Activated T-helper 1 cell treated with anti-CD3 and anti-CD28 coated beads, Interleukin-12 subunit alpha, Interleukin-12 subunit beta, Interleukin-2, Interleukin-4 antibody, amounts not matched to agents 30 ng/mL and 10 ng/mL and 1 ng/mL, durations not matched to agents 14 hours and 24 hours and 36 hours (primary cell): ENCODE measurements at regions of chr7 and their contacts with region 1.

Region 1: GRCh38 chr7:322111-322671 is 32.2 kb downstream of the FOXL3 start:
- DNase-seq: peak; percentile 78
- H3K4me3 Mint-ChIP-seq: no peak overlapping the region
- H3K27ac Mint-ChIP-seq: no peak overlapping the region
- H3K4me1 Mint-ChIP-seq: no peaks in the 10 kb centered on the region
- H3K27me3 Mint-ChIP-seq: peaks cover 7% of the 10 kb centered on the region

Region 2: GRCh38 chr7:774161-775109 is 452.2 kb after region 1 on chr7:
- intact Hi-C with region 1: loop called (anchors 1 kb)
- DNase-seq: peak; percentile 44
- H3K4me3 Mint-ChIP-seq: no peak overlapping the region
- H3K27ac Mint-ChIP-seq: no peak overlapping the region
- H3K4me1 Mint-ChIP-seq: no peaks in the 10 kb centered on the region
- H3K27me3 Mint-ChIP-seq: no peaks in the 10 kb centered on the region